SK-N-SH (cell line): ENCODE measurements at regions of chr11 and their contacts with region 1.

Region 1: DNA sequence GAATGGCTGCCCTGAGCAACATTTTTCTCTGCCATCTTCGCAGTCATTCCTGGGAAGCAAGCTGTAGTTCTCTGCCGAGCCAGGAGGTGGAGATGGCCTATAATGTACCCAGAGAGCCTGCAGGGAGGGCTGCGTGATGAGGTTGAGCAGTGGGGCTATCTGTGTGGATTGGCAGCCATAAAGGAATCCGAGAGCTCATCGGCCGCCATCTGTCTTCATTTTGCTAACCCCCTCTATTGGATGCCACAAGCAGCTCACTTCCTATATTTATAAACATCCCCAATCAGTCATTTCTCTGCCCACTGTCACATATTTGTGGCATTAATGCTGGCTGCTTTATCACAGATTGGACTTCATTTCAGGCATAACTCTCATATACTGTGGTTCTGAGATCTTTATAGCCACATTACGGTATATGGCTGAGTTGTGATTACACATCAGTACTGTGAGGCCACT is 209.5 kb downstream of the NTM start:
- DNase-seq: peak; percentile 61
- H3K4me3 ChIP-seq: no peak overlapping the region
- H3K27ac ChIP-seq: no peak overlapping the region
- H3K4me1 ChIP-seq: no peaks in the 10 kb centered on the region
- H3K27me3 ChIP-seq: no peaks in the 10 kb centered on the region
- CTCF ChIP-seq: 0 out of 2 replicates have a peak, but pooled peaks have one; percentile 15
- EP300 ChIP-seq: no peak
- RAD21 ChIP-seq: peak; percentile 55

Region 2: DNA sequence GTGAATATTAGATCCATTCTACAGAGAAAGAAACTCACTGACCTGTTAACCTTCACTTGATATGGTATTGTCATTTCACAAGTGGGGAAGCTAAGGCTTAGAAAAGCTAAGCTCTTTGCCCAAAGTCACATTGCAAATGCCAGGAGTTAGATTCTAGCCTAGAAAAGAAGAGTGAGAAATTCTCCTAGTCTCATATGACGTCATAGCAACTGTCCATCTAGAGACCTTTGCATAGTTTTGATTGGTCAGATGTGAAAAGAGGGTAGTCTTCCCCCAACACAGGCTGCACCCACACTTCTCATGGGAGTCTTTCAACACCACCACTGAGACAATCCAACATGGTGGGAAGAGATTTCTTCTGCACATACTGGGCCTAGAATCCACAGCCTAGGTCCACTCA is 11.7 kb before region 1 on chr11:
- CTCF ChIA-PET with region 1: interaction called, 16 read pairs
- POLR2A ChIA-PET with region 1: no interaction called
- DNase-seq: no peak
- H3K4me3 ChIP-seq: no peak overlapping the region
- H3K27ac ChIP-seq: no peak overlapping the region
- H3K4me1 ChIP-seq: no peaks in the 10 kb centered on the region
- H3K27me3 ChIP-seq: no peaks in the 10 kb centered on the region
- CTCF ChIP-seq: no peak
- EP300 ChIP-seq: no peak
- RAD21 ChIP-seq: no peak

Region 3: DNA sequence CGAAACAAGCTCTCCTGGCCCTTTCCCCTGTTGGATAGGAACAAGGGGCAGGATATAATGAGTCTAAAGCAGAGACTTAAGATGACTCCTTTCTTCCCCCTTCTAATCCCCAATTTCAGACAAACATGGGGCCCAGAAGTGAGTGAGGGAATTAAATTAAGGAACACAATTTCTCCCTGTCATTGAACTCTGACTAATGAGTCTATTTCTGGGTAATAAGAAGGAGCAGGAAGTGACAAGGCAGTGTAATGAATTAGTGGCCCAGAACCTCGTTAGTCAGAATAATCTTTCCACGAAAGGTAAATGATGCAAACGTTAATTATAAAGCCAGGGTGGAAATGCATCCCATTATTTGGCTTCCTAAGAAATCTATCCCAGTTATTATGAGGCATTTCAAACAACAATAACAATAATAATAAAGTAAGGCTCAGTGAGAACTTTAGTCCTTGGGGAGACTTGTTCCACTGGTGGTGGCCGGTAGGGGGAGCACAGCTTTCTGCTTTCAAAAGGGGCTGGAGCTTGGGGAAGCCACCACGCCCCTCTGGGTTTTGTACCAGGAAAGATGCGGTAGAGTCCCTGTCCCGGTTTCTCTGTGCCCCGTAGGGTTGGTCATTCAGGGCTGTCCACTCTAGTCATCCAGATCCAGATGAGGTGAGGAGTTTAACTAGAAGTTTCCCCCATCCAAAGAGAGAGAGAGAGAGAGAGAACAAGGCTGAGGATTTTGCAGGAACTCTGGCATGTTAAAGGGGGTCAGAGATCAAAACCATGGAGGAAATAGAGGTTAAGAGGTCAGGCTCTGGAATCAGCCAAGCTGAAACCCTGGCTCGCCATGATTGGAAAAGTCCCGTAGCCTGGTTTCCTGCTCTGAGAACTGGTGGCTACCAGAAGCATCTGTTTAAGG is 88.8 kb after region 1 on chr11:
- CTCF ChIA-PET with region 1: interaction called, 54 read pairs
- POLR2A ChIA-PET with region 1: no interaction called
- DNase-seq: peak; percentile 60
- H3K4me3 ChIP-seq: peak overlapping the region in 1 of 2 experiments; percentile 11; a peak in 1 of 4 replicates
- H3K27ac ChIP-seq: no peak overlapping the region
- H3K4me1 ChIP-seq: no peaks in the 10 kb centered on the region
- H3K27me3 ChIP-seq: no peaks in the 10 kb centered on the region
- CTCF ChIP-seq: peak; percentile 73
- EP300 ChIP-seq: no peak
- RAD21 ChIP-seq: no peak